Ovary (tissue), 10 donors: ENCODE measurements at regions of chr17 and their contacts with region 1.

Region 1: GRCh38 chr17:80008383-80008840 is 27.3 kb downstream of the TBC1D16 start:
- DNase-seq: peak; percentile 72 to 87 (median 82)
- H3K4me3 ChIP-seq: no peak overlapping the region
- H3K27ac ChIP-seq: no peak overlapping the region
- H3K4me1 ChIP-seq: peaks cover 3% of the 10 kb centered on the region
- H3K27me3 ChIP-seq: no peaks in the 10 kb centered on the region
- CTCF ChIP-seq: peak; percentile 87 to 94 (median 93)
- EP300 ChIP-seq: no peak
- POLR2A ChIP-seq: no peak

Region 2: DNA sequence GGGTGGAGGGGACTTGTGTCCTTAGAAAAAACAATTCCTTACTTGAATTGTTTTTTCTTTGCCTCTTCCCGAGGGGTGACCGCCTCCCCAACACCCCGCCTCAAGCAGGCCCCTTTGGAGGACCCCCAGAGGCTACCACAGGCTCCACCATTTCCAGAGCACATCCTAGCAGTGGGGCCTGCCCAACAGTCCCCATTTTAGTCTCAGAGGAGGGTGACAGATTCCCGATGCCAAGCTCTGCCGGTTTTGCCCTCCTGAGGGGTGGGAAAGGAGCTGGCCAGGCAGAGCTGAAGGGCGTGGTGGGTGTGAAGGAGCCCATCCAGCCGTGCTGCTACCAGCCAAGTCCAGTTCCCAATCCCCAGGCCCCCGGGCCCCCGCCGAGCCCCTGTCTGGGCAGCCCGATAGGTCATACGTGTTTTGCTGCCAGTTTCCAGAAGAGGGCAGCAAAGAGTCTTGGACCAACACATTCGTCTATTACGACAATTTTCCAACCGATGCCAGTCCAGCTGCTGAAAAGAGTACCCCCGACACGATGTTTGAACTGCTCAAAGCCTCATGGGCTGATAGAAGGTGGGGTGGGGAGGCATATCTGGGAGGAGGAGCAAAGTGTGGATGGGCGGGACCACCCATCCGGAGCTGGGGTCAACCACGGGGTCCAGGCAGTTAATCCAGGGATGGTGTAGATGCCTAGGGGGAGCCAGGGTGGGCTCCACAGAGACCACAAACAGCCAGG is 74.2 kb after region 1 on chr17:
- intact Hi-C with region 1: loop called in 1 of 4 experiments (anchors 5 kb)
- DNase-seq: peak in 4 of 5 donors; percentile 62 to 73 (median 66)
- H3K4me3 ChIP-seq: no peak overlapping the region
- H3K27ac ChIP-seq: no peak overlapping the region
- H3K4me1 ChIP-seq: no peaks in the 10 kb centered on the region
- H3K27me3 ChIP-seq: no peaks in the 10 kb centered on the region
- CTCF ChIP-seq: peak; percentile 44 to 67 (median 62)
- EP300 ChIP-seq: no peak
- POLR2A ChIP-seq: no peak

Region 3: GRCh38 chr17:80147035-80147836 is 138.8 kb after region 1 on chr17 and contains the start of gene EIF4A3:
- intact Hi-C with region 1: loop called in 1 of 4 experiments (anchors 5 kb)
- DNase-seq: peak; percentile 98 to 99 (median 99)
- H3K4me3 ChIP-seq: peak within 1 kb of the TSS; percentile 100
- H3K27ac ChIP-seq: peak within 1 kb of the TSS; percentile 87 to 92
- H3K4me1 ChIP-seq: peaks cover 9% of the 10 kb centered on the region
- H3K27me3 ChIP-seq: no peaks in the 10 kb centered on the region
- CTCF ChIP-seq: no peak
- EP300 ChIP-seq: peak; percentile 96
- POLR2A ChIP-seq: peak; percentile 91
- total RNA-seq, gene EIF4A3: 81.6 to 114 (median 93.6) TPM

Region 4: DNA sequence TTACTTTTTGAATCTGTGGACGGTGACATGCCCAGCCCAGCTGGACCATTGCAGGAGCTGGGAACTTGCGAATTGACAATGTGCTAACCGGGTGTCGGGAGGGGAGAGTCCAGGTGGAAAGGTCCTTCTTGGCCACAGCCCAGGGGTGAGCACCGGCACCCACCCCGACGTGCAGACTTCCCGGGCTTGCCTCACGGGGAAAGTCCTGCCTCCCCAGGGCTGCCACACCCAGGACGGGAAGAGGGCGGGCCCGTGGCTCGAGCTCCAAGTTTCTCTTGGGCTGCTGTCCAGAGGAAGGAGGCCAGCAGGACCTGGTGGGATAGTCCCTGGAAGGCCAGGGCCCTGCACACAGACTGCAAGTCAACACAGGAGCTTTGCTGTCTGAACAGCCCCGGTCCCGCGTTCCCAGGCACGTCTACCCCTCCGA is 179.1 kb after region 1 on chr17:
- intact Hi-C with region 1: no loop called
- DNase-seq: peak; percentile 38 to 71 (median 54)
- H3K4me3 ChIP-seq: no peak overlapping the region
- H3K27ac ChIP-seq: no peak overlapping the region
- H3K4me1 ChIP-seq: no peaks in the 10 kb centered on the region
- H3K27me3 ChIP-seq: no peaks in the 10 kb centered on the region
- CTCF ChIP-seq: no peak
- EP300 ChIP-seq: no peak
- POLR2A ChIP-seq: no peak